SK-N-SH (cell line): ENCODE measurements at regions of chr12 and their contacts with region 1.

Region 1: DNA sequence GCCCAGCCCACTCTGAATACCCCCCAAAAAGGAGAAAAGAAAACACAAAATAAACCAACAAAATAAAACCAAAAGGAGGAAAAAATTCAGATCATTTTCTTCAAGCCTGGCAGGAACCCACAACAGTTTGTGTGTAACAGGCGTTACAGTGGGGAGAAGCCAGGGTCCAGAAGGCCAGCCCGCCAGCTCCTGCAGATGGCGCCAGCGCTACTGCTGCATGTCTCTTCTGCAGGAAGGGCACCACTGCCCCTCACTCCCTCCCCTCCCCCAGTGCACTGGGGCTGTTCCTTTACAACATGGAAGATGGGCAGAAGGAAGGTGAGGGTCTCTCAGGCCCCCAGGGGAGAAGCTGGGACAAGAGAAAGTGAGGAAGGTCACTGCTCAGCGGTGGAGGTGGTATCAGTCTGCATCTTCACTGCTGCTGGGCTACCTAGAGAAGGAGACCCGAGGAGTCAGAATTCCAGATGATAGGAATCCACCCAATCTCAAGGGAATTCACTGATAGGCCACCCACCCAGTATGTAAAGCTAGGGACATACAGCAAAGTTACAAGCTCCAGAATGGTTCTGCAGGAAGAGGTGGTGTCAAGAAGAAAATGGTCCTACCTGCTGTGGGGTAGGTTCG is 2.3 kb upstream of the NOP2 start:
- DNase-seq: peak; percentile 83
- H3K4me3 ChIP-seq: no peak overlapping the region
- H3K27ac ChIP-seq: peak overlapping the region in 1 of 2 experiments; percentile 27; a peak in 1 of 4 replicates
- H3K4me1 ChIP-seq: peaks cover 4 to 8% of the 10 kb centered on the region in 2 experiments; a peak in 2 of 4 replicates
- H3K27me3 ChIP-seq: no peaks in the 10 kb centered on the region
- CTCF ChIP-seq: peak; percentile 71
- EP300 ChIP-seq: no peak
- RAD21 ChIP-seq: peak; percentile 53

Region 2: GRCh38 chr12:6554168-6555017 is 16.0 kb before region 1 on chr12:
- CTCF ChIA-PET with region 1: interaction called, 69 read pairs
- POLR2A ChIA-PET with region 1: interaction called, 7 read pairs
- DNase-seq: peak; percentile 89
- H3K4me3 ChIP-seq: peak overlapping the region; percentile 79 to 85
- H3K27ac ChIP-seq: peak overlapping the region; percentile 70 to 93; a peak in 3 of 4 replicates
- H3K4me1 ChIP-seq: peaks cover 36 to 40% of the 10 kb centered on the region in 2 experiments
- H3K27me3 ChIP-seq: no peaks in the 10 kb centered on the region
- CTCF ChIP-seq: peak; percentile 69
- EP300 ChIP-seq: no peak
- RAD21 ChIP-seq: peak; percentile 51

Region 3: DNA sequence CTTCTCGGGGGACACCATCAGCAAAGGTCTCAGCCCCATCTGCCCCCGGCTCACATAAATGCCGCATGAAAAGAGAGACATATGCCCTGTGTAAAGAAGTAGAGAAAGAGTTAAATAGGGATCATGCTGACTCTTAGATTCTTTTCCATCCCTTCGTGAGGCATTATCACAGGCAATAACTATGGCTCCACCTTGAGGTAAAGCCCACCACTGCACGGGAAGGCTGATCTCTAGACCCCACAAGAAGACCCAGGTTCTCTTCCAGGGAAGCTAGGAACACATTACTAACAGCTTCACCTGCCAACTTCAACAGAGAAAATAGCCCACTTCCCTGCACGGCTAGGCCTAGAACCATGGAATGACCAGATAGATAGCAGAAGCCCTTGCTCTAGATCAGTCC is 11.8 kb after region 1 on chr12:
- CTCF ChIA-PET with region 1: interaction called, 22 read pairs
- POLR2A ChIA-PET with region 1: interaction called, 3 read pairs
- DNase-seq: peak; percentile 39
- H3K4me3 ChIP-seq: no peak overlapping the region
- H3K27ac ChIP-seq: no peak overlapping the region
- H3K4me1 ChIP-seq: no peaks in the 10 kb centered on the region
- H3K27me3 ChIP-seq: no peaks in the 10 kb centered on the region
- CTCF ChIP-seq: peak; percentile 33
- EP300 ChIP-seq: no peak
- RAD21 ChIP-seq: no peak

Region 4: DNA sequence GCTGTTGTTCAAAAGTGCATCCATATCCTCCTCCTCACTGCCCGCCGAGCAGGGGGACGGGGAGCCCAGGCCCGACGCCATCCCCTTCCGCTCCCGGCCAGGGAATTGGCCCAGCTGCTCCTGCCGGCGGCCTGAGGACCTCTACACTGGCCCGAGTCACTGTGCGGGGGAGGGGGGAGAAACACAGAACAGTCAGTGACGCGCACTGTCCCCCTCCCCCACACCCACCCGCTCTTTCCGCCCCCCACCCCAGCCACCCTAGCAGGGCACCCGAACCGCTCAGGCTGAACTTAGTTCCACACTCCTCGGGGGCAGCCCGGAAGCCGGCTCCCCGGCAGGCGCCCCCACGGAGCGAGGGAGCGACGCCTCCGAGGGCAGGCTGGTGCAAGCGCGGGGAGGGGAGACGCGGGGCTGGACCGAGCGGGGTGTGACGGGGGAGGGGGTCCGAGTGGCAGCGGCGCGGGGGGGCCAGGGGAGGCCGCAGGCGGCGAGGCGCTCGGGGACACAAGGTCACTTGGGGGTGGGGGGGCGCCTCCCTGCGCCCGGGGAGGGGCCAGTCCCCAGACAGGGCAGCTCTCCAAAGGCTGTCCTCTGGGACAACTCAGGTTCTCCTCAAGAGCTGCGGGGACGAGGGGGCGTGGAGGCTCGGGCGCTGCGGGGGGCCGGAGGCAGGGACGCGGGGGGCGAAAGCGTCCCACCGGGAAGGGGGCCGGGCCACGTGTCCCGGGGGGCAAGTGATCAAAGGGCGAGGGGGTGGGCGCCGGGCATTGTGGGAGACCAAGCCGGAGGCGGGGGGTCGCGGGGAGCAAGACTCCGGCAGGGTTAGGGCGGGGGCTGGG is 36.1 kb after region 1 on chr12:
- CTCF ChIA-PET with region 1: interaction called, 17 read pairs
- POLR2A ChIA-PET with region 1: interaction called, 4 read pairs
- DNase-seq: peak; percentile 72
- H3K4me3 ChIP-seq: peak overlapping the region; percentile 48 to 90
- H3K27ac ChIP-seq: peak overlapping the region; percentile 70 to 94
- H3K4me1 ChIP-seq: peaks cover 29 to 50% of the 10 kb centered on the region in 2 experiments
- H3K27me3 ChIP-seq: no peaks in the 10 kb centered on the region
- CTCF ChIP-seq: no peak
- EP300 ChIP-seq: no peak
- RAD21 ChIP-seq: no peak